MCF 10A (cell line): ENCODE measurements at regions of chr5 and their contacts with region 1.

Region 1: GRCh38 chr5:151651997-151652645 is 34.6 kb downstream of the SPARC start:
- DNase-seq: peak; percentile 94
- H3K4me3 Mint-ChIP-seq: no peak overlapping the region
- H3K27ac Mint-ChIP-seq: no peak overlapping the region
- H3K4me1 Mint-ChIP-seq: peaks cover 10% of the 10 kb centered on the region
- H3K27me3 Mint-ChIP-seq: no peaks in the 10 kb centered on the region
- CTCF ChIP-seq: peak; percentile 99

Region 2: DNA sequence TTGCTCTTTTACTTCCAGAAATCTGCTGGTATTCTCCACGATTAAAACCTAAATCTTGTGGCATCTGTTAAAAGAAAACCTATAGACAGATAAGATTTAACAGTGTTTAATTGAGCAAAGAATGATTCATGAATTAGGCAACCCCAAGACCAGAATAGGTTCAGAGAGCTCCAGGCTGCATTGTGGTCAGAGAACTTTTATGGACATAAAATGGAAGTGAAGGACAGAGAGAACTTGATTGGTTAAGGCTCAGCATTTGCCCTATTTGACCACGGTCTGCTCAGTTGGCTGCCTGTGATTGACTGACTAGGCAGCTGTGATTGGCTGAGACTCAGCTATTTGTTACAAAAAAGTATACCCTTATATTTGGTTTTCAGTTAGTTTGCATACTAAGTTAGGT is 294.3 kb before region 1 on chr5:
- CTCF ChIA-PET with region 1: no interaction called
- POLR2A ChIA-PET with region 1: no interaction called
- intact Hi-C with region 1: no loop called
- DNase-seq: peak; percentile 58
- H3K4me3 Mint-ChIP-seq: no peak overlapping the region
- H3K27ac Mint-ChIP-seq: no peak overlapping the region
- H3K4me1 Mint-ChIP-seq: no peaks in the 10 kb centered on the region
- H3K27me3 Mint-ChIP-seq: peaks cover 12% of the 10 kb centered on the region
- CTCF ChIP-seq: no peak

Region 3: GRCh38 chr5:151461312-151461711 is 190.8 kb before region 1 on chr5:
- CTCF ChIA-PET with region 1: interaction called, 19 read pairs
- POLR2A ChIA-PET with region 1: no interaction called
- intact Hi-C with region 1: no loop called
- DNase-seq: no peak
- H3K4me3 Mint-ChIP-seq: no peak overlapping the region
- H3K27ac Mint-ChIP-seq: no peak overlapping the region
- H3K4me1 Mint-ChIP-seq: no peaks in the 10 kb centered on the region
- H3K27me3 Mint-ChIP-seq: no peaks in the 10 kb centered on the region
- CTCF ChIP-seq: no peak

Region 4: GRCh38 chr5:151523335-151523734 is 128.8 kb before region 1 on chr5:
- CTCF ChIA-PET with region 1: interaction called, 108 read pairs
- POLR2A ChIA-PET with region 1: interaction called, 11 read pairs
- intact Hi-C with region 1: loop called (anchors 1 kb)
- DNase-seq: peak; percentile 71
- H3K4me3 Mint-ChIP-seq: no peak overlapping the region
- H3K27ac Mint-ChIP-seq: no peak overlapping the region
- H3K4me1 Mint-ChIP-seq: peaks cover 2% of the 10 kb centered on the region
- H3K27me3 Mint-ChIP-seq: no peaks in the 10 kb centered on the region
- CTCF ChIP-seq: peak; percentile 84

Region 5: GRCh38 chr5:151585970-151586369 is 66.2 kb before region 1 on chr5:
- CTCF ChIA-PET with region 1: interaction called, 45 read pairs
- POLR2A ChIA-PET with region 1: interaction called, 30 read pairs
- intact Hi-C with region 1: no loop called
- DNase-seq: peak; percentile 95
- H3K4me3 Mint-ChIP-seq: no peak overlapping the region
- H3K27ac Mint-ChIP-seq: peak overlapping the region; percentile 81
- H3K4me1 Mint-ChIP-seq: peaks cover 58% of the 10 kb centered on the region
- H3K27me3 Mint-ChIP-seq: no peaks in the 10 kb centered on the region
- CTCF ChIP-seq: no peak

Region 6: DNA sequence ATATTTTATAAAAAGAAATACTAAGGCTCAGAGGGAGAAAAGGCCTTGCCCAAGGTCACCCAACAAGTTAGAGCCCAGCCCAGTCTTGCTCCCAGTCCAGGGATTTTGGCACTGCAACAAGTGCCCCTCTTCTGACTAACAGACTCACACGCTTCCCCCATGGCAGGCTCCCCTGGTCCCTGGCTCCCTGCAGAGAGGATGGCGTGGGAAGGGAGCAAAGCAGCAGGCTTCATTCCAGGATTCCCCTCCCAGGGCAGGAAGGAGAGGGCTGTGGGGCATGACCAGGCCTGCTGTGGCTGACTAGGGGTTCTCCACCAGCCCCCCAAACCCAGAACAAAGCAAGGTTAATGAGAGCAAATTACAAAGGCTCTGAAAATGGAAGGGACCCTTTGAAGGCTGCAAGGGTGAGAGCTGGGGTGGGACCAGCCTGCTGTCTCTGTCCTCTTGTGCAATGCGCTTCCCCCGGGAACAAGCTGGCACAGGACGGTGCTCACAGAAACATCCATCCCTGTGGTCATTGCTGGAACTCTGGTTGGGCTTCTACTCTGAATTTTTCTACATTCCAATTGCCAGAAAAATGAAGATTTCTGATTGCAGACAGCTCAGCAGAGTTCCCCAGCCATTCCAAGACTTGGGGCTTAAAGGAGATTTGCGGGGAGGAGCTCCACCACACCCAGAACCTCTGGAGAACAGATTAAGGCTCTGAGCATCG is 23.9 kb before region 1 on chr5:
- CTCF ChIA-PET with region 1: interaction called, 174 read pairs
- POLR2A ChIA-PET with region 1: interaction called, 52 read pairs
- intact Hi-C with region 1: no loop called
- DNase-seq: peak; percentile 99
- H3K4me3 Mint-ChIP-seq: no peak overlapping the region
- H3K27ac Mint-ChIP-seq: peak overlapping the region; percentile 50
- H3K4me1 Mint-ChIP-seq: peaks cover 53% of the 10 kb centered on the region
- H3K27me3 Mint-ChIP-seq: no peaks in the 10 kb centered on the region
- CTCF ChIP-seq: no peak

Region 7: GRCh38 chr5:151740336-151740942 is 88.3 kb after region 1 on chr5:
- CTCF ChIA-PET with region 1: interaction called, 652 read pairs
- POLR2A ChIA-PET with region 1: interaction called, 3 read pairs
- intact Hi-C with region 1: no loop called
- DNase-seq: peak; percentile 80
- H3K4me3 Mint-ChIP-seq: peak overlapping the region; percentile 45
- H3K27ac Mint-ChIP-seq: peak overlapping the region; percentile 86
- H3K4me1 Mint-ChIP-seq: peaks cover 55% of the 10 kb centered on the region
- H3K27me3 Mint-ChIP-seq: no peaks in the 10 kb centered on the region
- CTCF ChIP-seq: peak; percentile 93